Activated T-helper 1 cell treated with anti-CD3 and anti-CD28 coated beads, Interleukin-12 subunit alpha, Interleukin-12 subunit beta, Interleukin-2, Interleukin-4 antibody, amounts not matched to agents 30 ng/mL and 10 ng/mL and 1 ng/mL, durations not matched to agents 14 hours and 24 hours and 36 hours (primary cell): ENCODE measurements at regions of chr5 and their contacts with region 1.

Region 1: GRCh38 chr5:6496207-6496584 is 47.5 kb downstream of the UBE2QL1 start:
- DNase-seq: peak; percentile 13
- H3K4me3 Mint-ChIP-seq: no peak overlapping the region
- H3K27ac Mint-ChIP-seq: peak overlapping the region; percentile 8
- H3K4me1 Mint-ChIP-seq: peaks cover 43% of the 10 kb centered on the region
- H3K27me3 Mint-ChIP-seq: peaks cover 3% of the 10 kb centered on the region

Region 2: DNA sequence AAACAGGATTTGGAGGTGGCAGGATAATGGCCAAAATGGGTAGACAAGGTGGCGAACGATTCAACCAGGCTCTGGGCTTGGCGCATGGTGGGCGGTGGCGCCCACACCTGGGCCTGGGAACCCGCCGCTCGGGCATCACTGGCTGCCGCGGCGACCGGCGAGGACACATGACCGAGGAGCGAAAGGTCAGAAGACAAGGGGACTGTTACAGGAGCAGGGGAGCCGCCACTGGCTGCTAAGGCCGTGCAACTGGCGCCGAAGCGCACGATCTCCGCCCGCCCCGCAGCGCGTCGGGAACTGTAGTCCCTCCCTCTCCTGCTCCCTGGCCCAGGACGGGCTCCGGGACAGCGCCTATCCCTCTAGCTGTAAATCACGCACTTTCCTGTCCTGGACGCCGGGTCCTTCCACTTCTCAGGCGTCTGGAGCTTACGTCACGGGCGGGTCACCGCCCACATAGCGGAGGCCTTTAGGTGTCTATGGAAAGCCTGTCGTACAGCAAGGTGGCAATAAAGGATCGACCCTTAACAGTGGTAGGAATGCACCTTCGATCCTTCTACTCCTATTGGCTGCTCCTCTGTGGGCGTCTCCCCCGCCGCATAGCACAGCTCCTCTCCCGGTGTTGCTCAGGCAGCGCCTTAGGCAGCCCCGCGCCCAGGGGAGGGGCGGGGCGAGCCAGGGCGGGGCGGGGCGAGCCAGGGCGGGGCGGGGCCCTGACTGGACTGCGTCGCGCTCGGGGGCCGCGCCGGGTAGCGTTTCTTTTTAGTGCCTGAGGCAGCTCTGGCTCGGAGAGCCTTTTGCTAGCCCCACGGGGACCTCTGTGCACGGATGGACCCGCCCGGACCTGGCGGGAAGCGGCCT is 1074.0 kb before region 1 on chr5 and contains the start of gene ICE1:
- intact Hi-C with region 1: loop called (anchors 5 kb)
- DNase-seq: peak; percentile 91
- H3K4me3 Mint-ChIP-seq: peak within 1 kb of the TSS; percentile 96
- H3K27ac Mint-ChIP-seq: peak within 1 kb of the TSS; percentile 98
- H3K4me1 Mint-ChIP-seq: peaks cover 18% of the 10 kb centered on the region
- H3K27me3 Mint-ChIP-seq: no peaks in the 10 kb centered on the region
- total RNA-seq, gene ICE1: 35.3 and 38.2 TPM in 2 replicates

Region 3: GRCh38 chr5:6448622-6449464 is 47.4 kb before region 1 on chr5 and contains the start of gene UBE2QL1:
- intact Hi-C with region 1: loop called (anchors 5 kb)
- DNase-seq: no peak
- H3K4me3 Mint-ChIP-seq: peak within 1 kb of the TSS; percentile 83
- H3K27ac Mint-ChIP-seq: peak within 1 kb of the TSS; percentile 67
- H3K4me1 Mint-ChIP-seq: peaks cover 5% of the 10 kb centered on the region
- H3K27me3 Mint-ChIP-seq: peaks cover 38% of the 10 kb centered on the region
- total RNA-seq, gene UBE2QL1: 0.73 and 0.91 TPM in 2 replicates

Region 4: GRCh38 chr5:6483880-6484382 is 12.3 kb before region 1 on chr5:
- intact Hi-C with region 1: loop called (anchors 1 kb)
- DNase-seq: no peak
- H3K4me3 Mint-ChIP-seq: no peak overlapping the region
- H3K27ac Mint-ChIP-seq: no peak overlapping the region
- H3K4me1 Mint-ChIP-seq: peaks cover 38% of the 10 kb centered on the region
- H3K27me3 Mint-ChIP-seq: peaks cover 2% of the 10 kb centered on the region

Region 5: DNA sequence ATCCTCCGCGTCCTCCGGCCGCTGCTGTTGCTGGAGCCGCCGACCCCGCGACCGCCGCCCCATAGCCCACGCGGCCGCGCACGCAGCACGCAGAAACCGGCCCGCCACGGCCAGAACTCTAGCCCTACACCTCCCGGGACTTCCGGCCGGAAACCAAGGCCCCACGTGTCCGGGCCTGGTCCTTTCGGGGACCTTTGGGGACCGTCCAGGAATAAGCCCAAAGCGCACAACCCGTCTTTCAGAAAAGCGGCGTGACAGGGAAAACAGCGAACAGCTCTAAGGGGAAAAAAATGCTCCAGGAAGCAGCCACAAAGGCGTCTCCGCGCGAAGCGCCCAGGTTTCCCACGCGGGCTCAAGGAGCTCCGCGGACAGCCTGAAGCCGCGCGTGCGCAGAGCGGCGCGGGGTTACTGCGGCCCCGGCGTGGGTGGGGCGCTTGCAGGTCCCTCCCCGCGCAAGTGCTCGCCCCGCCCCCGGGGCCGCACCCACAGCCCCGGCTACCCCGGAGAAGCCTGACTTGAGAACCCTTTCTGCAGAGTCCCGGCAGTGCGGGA is 136.8 kb after region 1 on chr5 and contains the starts of genes NSUN2 and SRD5A1:
- intact Hi-C with region 1: loop called (anchors 5 kb)
- DNase-seq: peak; percentile 90
- H3K4me3 Mint-ChIP-seq: peak within 1 kb of the TSS; percentile 98
- H3K27ac Mint-ChIP-seq: peak within 1 kb of the TSS; percentile 97
- H3K4me1 Mint-ChIP-seq: peaks cover 57% of the 10 kb centered on the region
- H3K27me3 Mint-ChIP-seq: no peaks in the 10 kb centered on the region
- total RNA-seq, gene NSUN2: 146 and 149 TPM in 2 replicates
- total RNA-seq, gene SRD5A1: 13.8 and 14.0 TPM in 2 replicates

Region 6: DNA sequence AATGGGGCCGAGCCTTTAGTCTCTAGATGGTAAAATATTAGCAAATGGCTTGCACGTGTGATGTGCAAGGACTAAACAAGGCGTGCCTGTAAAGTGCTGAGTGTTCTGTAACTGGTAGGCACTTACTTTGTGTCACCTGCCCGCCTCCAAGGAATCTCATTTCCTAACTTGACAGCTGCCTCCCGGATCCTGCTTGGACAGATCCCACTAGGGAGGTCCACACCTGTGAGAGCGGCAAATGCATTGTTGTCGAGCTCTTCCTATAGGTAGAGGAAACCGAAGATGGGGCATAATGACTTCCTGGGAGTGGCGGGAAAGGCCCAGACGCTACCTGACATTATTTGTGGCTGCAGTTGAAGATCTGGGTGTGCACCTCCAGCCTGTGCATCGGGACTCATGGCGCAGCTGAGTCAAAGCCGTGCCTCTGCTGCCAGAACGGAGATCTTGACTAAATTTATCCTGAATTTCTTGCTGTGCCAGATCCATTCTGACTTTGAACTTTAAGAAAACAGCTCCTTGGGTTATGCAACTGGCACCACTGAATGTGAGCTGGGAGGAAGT is 296.8 kb after region 1 on chr5:
- intact Hi-C with region 1: no loop called
- DNase-seq: no peak
- H3K4me3 Mint-ChIP-seq: no peak overlapping the region
- H3K27ac Mint-ChIP-seq: no peak overlapping the region
- H3K4me1 Mint-ChIP-seq: peaks cover 5% of the 10 kb centered on the region
- H3K27me3 Mint-ChIP-seq: peaks cover 7% of the 10 kb centered on the region

Region 7: DNA sequence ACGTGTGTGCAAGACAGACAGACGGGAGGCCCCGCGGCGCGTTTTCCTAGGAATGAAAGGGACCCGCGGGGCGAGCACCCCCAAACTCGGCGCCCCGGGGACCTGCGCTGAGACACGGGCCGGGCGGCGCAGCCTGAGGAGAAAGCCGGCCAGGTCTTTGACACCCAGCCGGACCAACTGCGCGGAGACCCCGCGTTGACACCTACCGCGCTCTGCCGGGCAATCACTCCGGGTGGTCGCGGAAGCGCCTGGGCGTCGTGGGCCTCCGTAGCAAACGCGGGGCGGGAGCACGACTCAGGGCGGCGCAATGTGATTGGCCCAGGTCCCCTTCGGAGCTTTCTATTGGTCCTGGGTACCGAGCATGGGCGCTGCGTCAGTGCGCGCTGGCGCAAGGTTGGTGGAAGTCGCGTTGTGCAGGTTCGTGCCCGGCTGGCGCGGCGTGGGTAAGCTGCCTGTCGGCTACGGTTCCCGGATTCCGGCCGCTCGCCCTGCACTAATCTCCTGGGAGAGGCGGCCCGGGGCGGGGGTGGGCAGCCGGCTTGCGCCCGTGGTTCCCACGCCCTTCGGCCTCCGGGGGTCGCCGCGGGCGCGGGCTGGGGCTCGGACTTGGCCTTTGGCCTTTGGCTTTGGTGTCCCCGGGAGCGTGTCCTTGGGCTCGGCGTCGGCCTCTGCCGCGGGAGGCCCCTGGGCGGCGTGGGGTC is 1372.7 kb after region 1 on chr5 and contains the starts of genes FASTKD3 and MTRR:
- intact Hi-C with region 1: loop called (anchors 10 kb)
- DNase-seq: peak; percentile 87
- H3K4me3 Mint-ChIP-seq: peak within 1 kb of the TSS; percentile 97
- H3K27ac Mint-ChIP-seq: peak within 1 kb of the TSS; percentile 89
- H3K4me1 Mint-ChIP-seq: peaks cover 73% of the 10 kb centered on the region
- H3K27me3 Mint-ChIP-seq: no peaks in the 10 kb centered on the region
- total RNA-seq, gene FASTKD3: 13.5 and 18.6 TPM in 2 replicates
- total RNA-seq, gene MTRR: 83.0 and 90.4 TPM in 2 replicates